CD8-positive, alpha-beta memory T cell (primary cell): ENCODE measurements at regions of chr9 and their contacts with region 1.

Region 1: GRCh38 chr9:272251-273213 is 57.9 kb downstream of the DOCK8 start:
- DNase-seq: peak; percentile 66 to 87 (median 83)
- H3K4me3 ChIP-seq: peak overlapping the region; percentile 76
- H3K4me3 Mint-ChIP-seq: peak overlapping the region; percentile 85 to 97 (median 92)
- H3K27ac ChIP-seq: peak overlapping the region; percentile 82
- H3K27ac Mint-ChIP-seq: peak overlapping the region in 7 of 8 donors; percentile 89 to 100 (median 95)
- H3K4me1 ChIP-seq: peaks cover 52% of the 10 kb centered on the region
- H3K4me1 Mint-ChIP-seq: peaks cover 49 to 71% (median 71%) of the 10 kb centered on the region in 3 donors
- H3K27me3 ChIP-seq: no peaks in the 10 kb centered on the region
- H3K27me3 Mint-ChIP-seq: no peaks in the 10 kb centered on the region

Region 2: GRCh38 chr9:214648-215493 is 57.7 kb before region 1 on chr9 and contains the start of gene DOCK8:
- CTCF ChIA-PET with region 1: interaction called, 17 read pairs
- POLR2A ChIA-PET with region 1: interaction called, 32 read pairs
- DNase-seq: peak; percentile 27 to 75 (median 51)
- H3K4me3 ChIP-seq: peak within 1 kb of the TSS; percentile 69
- H3K4me3 Mint-ChIP-seq: peak within 1 kb of the TSS; percentile 83 to 95 (median 89)
- H3K27ac ChIP-seq: peak within 1 kb of the TSS; percentile 57
- H3K27ac Mint-ChIP-seq: peak within 1 kb of the TSS in 7 of 8 donors; percentile 17 to 88 (median 82)
- H3K4me1 ChIP-seq: peaks cover 13% of the 10 kb centered on the region
- H3K4me1 Mint-ChIP-seq: peaks cover 15 to 33% (median 24%) of the 10 kb centered on the region in 3 donors
- H3K27me3 ChIP-seq: no peaks in the 10 kb centered on the region
- H3K27me3 Mint-ChIP-seq: no peaks in the 10 kb centered on the region
- total RNA-seq, gene DOCK8: 136 to 141 TPM

Region 3: GRCh38 chr9:242461-243080 is 30.0 kb before region 1 on chr9:
- CTCF ChIA-PET with region 1: no interaction called
- POLR2A ChIA-PET with region 1: interaction called, 13 read pairs
- DNase-seq: no peak
- H3K4me3 ChIP-seq: no peak overlapping the region
- H3K4me3 Mint-ChIP-seq: peak overlapping the region in 6 of 7 donors; percentile 20 to 70 (median 38)
- H3K27ac ChIP-seq: no peak overlapping the region
- H3K27ac Mint-ChIP-seq: peak overlapping the region in 5 of 8 donors; percentile 22 to 87 (median 32)
- H3K4me1 ChIP-seq: peaks cover 8% of the 10 kb centered on the region
- H3K4me1 Mint-ChIP-seq: peaks cover 14 to 46% (median 32%) of the 10 kb centered on the region in 3 donors
- H3K27me3 ChIP-seq: no peaks in the 10 kb centered on the region
- H3K27me3 Mint-ChIP-seq: peaks cover 2 to 3% of the 10 kb centered on the region in 2 donors

Region 4: DNA sequence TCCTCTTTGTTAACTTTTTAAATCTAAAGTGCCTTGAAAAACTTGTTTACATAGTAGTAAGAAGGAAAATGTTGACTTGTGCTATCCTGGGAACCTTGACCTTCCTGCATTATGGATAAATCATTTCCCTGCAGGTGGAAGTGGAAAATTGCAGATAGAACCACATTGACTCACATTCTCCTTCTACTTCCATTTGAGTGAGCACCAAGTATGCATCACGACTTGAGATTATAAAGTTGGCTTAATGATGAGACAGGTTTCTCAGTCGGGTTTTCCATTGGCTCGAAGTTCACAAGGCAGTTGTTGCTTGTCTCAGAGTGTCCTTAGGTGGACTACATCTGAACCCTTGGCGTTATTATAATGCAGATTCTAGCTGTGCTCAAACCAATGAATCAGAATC is 18.0 kb before region 1 on chr9:
- CTCF ChIA-PET with region 1: no interaction called
- POLR2A ChIA-PET with region 1: no interaction called
- DNase-seq: no peak
- H3K4me3 ChIP-seq: no peak overlapping the region
- H3K4me3 Mint-ChIP-seq: no peak overlapping the region
- H3K27ac ChIP-seq: no peak overlapping the region
- H3K27ac Mint-ChIP-seq: no peak overlapping the region
- H3K4me1 ChIP-seq: no peaks in the 10 kb centered on the region
- H3K4me1 Mint-ChIP-seq: peaks cover 0 to 11% (median 5%) of the 10 kb centered on the region in 3 donors
- H3K27me3 ChIP-seq: no peaks in the 10 kb centered on the region
- H3K27me3 Mint-ChIP-seq: peaks cover 0 to 2% of the 10 kb centered on the region in 2 donors

Region 5: DNA sequence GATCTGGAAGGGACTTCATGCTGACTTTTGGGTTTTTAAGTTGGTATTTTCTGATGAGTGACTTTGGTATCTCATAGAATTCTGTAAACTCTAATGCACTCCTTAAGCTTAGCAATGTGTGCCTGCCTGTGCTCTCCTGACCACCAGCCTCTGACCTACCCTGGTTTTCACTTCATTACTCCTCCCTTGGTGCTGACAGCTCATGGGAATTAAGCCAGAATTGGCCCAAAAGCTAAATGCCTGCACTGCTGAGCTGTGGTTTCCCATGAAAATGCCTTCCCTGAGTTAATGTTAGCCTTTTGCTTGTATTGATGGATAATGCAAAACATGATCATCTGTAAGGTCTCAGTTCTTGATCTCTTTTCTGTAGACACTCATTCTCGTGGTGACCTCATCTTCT is 250.1 kb after region 1 on chr9:
- CTCF ChIA-PET with region 1: no interaction called
- POLR2A ChIA-PET with region 1: no interaction called
- DNase-seq: no peak
- H3K4me3 ChIP-seq: no peak overlapping the region
- H3K4me3 Mint-ChIP-seq: no peak overlapping the region
- H3K27ac ChIP-seq: no peak overlapping the region
- H3K27ac Mint-ChIP-seq: peak overlapping the region in 1 of 8 donors; percentile 55
- H3K4me1 ChIP-seq: peaks cover under 1% of the 10 kb centered on the region
- H3K4me1 Mint-ChIP-seq: peaks cover 0 to 6% (median 0%) of the 10 kb centered on the region in 3 donors
- H3K27me3 ChIP-seq: no peaks in the 10 kb centered on the region
- H3K27me3 Mint-ChIP-seq: peaks cover 0 to 1% of the 10 kb centered on the region in 2 donors